ENCODE measurements at regions of chr4 and their contacts with region 1.

Region 1: DNA sequence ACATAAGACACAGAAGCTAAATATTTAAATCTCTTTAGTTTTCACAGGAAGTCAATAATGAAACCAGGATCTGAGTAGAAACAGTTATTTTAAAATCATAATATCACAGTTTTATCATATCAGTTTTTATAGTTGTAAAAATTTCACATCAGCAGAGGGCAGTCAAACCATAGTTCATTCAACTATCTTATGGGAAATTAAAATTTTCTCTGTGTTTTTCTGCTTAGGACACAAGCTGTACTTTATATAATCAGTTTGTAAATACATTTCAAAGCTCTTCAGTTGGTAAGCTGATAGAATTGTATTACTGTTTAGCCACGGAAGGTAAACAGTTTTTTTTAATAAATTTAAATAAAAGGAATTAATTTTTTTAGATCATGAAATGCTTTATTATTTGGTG is 204.8 kb upstream of the NUDT6 start:
- DNase-seq: peak; percentile 9
- H3K4me3 ChIP-seq: no peak overlapping the region
- H3K27ac ChIP-seq: peak overlapping the region; percentile 89
- H3K4me1 ChIP-seq: peaks cover 3% of the 10 kb centered on the region
- H3K27me3 ChIP-seq: no peaks in the 10 kb centered on the region
- CTCF ChIP-seq: peak; percentile 14 to 42

Region 2: DNA sequence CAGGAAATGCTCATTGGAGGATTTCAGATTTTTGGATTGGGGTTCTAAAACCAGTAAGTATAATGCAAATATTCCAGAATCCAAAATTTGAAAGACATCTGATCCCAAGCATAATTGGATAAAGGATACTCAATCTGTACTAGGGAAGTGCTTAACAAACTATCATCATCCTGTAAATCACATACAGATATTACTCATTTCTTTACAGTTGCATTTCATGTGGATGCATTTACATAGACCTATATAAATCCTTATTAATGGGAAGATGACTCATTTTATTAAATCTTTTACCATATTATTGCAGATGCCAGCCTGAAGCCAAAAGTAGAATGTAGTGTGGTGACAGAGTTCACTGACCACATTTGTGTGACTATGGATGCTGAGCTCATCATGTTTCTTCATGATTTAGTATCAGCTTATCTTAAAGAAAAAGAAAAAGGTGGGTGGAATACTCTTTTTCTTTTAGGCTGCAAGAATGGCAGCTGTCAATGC is 770.9 kb before region 1 on chr4:
- CTCF ChIA-PET with region 1: no interaction called
- dilution Hi-C with region 1: no loop called
- in situ Hi-C with region 1: no loop called
- intact Hi-C with region 1: no loop called
- DNase-seq: no peak
- H3K4me3 ChIP-seq: no peak overlapping the region
- H3K27ac ChIP-seq: no peak overlapping the region
- H3K4me1 ChIP-seq: no peaks in the 10 kb centered on the region
- H3K27me3 ChIP-seq: no peaks in the 10 kb centered on the region
- CTCF ChIP-seq: no peak

Region 3: GRCh38 chr4:123564758-123565346 is 437.6 kb after region 1 on chr4:
- CTCF ChIA-PET with region 1: no interaction called
- dilution Hi-C with region 1: no loop called
- in situ Hi-C with region 1: no loop called
- intact Hi-C with region 1: loop called (anchors 2 kb)
- DNase-seq: peak; percentile 72
- H3K4me3 ChIP-seq: no peak overlapping the region
- H3K27ac ChIP-seq: no peak overlapping the region
- H3K4me1 ChIP-seq: peaks cover 5% of the 10 kb centered on the region
- H3K27me3 ChIP-seq: no peaks in the 10 kb centered on the region
- CTCF ChIP-seq: peak; percentile 92 to 99

Region 4: DNA sequence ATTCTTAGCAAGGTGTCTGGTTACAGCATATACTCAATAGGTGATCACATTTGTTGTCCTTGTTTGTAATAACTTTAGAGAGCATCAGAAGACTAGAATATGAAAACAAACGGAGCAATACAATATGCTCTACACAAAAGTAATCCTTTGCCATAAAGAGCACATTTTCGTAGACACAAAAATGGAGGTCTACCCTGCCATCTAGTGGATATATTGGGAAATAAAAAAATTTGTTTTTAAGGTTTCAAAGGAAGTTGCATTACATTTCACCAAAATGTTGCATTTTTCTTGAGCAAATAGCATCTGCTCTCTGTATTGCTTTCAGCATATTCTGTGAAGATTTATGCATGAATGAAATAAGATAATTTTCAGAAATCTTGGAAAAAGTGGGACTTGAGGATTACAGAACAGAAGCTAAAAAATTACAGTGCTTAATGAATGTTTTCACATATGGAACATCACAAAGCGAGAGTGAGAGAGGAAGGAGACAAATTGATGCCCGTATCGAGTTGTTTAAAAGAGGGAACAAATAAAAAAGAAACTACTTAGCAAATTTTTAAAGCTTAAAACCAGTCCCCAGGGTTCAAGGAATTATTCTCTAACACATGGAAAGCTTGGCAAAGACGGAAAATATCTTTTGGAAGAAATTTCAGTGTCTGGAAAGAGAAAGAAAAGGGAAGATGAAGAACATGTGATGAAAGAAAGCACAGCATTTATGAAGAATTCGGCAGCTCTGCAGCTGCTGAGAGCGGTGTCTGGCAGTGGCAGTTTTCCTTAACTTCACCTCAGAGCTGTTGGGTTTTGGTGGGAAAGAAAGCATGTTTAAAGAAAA is 1195.2 kb after region 1 on chr4:
- CTCF ChIA-PET with region 1: no interaction called
- dilution Hi-C with region 1: no loop called
- in situ Hi-C with region 1: no loop called
- intact Hi-C with region 1: loop called (anchors 5 kb)
- DNase-seq: peak; percentile 24
- H3K4me3 ChIP-seq: no peak overlapping the region
- H3K27ac ChIP-seq: no peak overlapping the region
- H3K4me1 ChIP-seq: no peaks in the 10 kb centered on the region
- H3K27me3 ChIP-seq: no peaks in the 10 kb centered on the region
- CTCF ChIP-seq: peak; percentile 42 to 48

Measured in mammary epithelial cell (primary cell).